ENCODE measurements at regions of chr19 and their contacts with region 1.

Region 1: DNA sequence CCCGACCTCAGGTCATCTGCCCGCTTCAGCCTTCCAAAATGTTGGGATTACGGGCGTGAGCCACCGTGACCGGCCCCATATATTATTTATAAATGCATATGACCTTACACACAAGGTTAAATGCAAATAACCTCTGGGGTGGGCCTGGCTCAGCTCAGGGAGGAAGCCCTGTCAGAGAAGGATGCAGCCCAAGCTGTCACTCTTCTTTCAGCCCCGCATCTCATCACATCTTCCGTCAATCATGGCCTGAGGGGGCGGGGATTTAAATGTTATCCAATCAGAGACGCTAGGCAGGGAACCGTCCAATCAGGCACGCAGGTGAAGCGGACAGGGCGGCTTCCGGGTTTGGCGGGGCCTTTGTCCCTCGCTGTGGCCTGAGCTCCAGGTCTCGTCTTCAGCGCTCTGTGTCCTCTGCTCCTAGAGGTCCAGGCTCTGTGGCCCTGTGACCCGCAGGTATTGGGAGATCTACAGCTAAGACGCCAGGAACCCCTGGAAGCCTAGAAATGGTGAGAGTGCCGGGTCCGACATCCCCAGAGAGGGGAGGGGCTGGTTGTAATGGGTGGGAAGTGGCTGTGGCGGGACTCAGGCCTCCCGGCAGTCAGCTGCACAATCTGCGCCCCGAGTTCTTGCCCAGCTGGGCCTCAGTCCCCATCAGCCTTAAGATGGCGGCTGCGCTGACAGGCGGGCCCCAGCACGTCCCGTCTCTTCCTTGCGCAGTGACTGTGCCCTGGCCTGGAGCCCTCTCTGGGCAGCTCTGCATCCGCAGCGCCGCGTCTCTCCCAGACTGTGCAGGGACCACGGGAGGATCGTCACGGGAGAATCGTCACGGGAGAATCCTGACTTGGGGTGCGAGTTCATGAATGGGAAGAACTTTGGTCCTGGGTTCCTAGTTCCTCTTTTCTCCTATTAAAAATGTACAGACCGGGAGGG is at the start of gene ZNF430:
- DNase-seq: peak; percentile 94 to 96
- ATAC-seq: peak; percentile 99
- H3K4me3 ChIP-seq: peak within 1 kb of the TSS; percentile 80 to 85
- H3K27ac ChIP-seq: peak within 1 kb of the TSS; percentile 16 to 46
- H3K4me1 ChIP-seq: no peaks in the 10 kb centered on the region
- H3K27me3 ChIP-seq: no peaks in the 10 kb centered on the region
- total RNA-seq, gene ZNF430: 13.5 to 17.4 TPM

Region 2: GRCh38 chr19:20964798-20965197 is 55.8 kb before region 1 on chr19:
- intact Hi-C with region 1: no loop called
- DNase-seq: no peak
- ATAC-seq: no peak
- H3K4me3 ChIP-seq: no peak overlapping the region
- H3K27ac ChIP-seq: no peak overlapping the region
- H3K4me1 ChIP-seq: no peaks in the 10 kb centered on the region
- H3K27me3 ChIP-seq: no peaks in the 10 kb centered on the region

Region 3: GRCh38 chr19:21130097-21130775 is 109.7 kb after region 1 on chr19:
- intact Hi-C with region 1: no loop called
- DNase-seq: no peak
- ATAC-seq: no peak
- H3K4me3 ChIP-seq: no peak overlapping the region
- H3K27ac ChIP-seq: no peak overlapping the region
- H3K4me1 ChIP-seq: no peaks in the 10 kb centered on the region
- H3K27me3 ChIP-seq: no peaks in the 10 kb centered on the region

Region 4: GRCh38 chr19:21141787-21142464 is 121.4 kb after region 1 on chr19 and contains the start of gene ZNF431:
- intact Hi-C with region 1: loop called in 1 of 2 experiments (anchors 5 kb)
- DNase-seq: peak; percentile 96
- ATAC-seq: peak; percentile 96
- H3K4me3 ChIP-seq: peak within 1 kb of the TSS; percentile 43 to 93
- H3K27ac ChIP-seq: peak within 1 kb of the TSS in 1 of 2 donors; percentile 90
- H3K4me1 ChIP-seq: no peaks in the 10 kb centered on the region
- H3K27me3 ChIP-seq: no peaks in the 10 kb centered on the region
- total RNA-seq, gene ZNF431: 13.4 to 20.2 TPM